CD4-positive, alpha-beta T cell (primary cell): ENCODE measurements at regions of chr22 and their contacts with region 1.

Region 1: GRCh38 chr22:19143967-19144400 is 467 bp downstream of the ESS2 start:
- DNase-seq: peak in 7 of 14 experiments; percentile 13 to 66 (median 25)
- ATAC-seq: peak; percentile 16
- H3K4me3 ChIP-seq: peak overlapping the region; percentile 90
- H3K4me3 Mint-ChIP-seq: peak overlapping the region; percentile 97
- H3K27ac ChIP-seq: peak overlapping the region; percentile 81 to 86
- H3K27ac Mint-ChIP-seq: peak overlapping the region; percentile 94
- H3K4me1 ChIP-seq: peaks cover 23% of the 10 kb centered on the region
- H3K4me1 Mint-ChIP-seq: peaks cover 22% of the 10 kb centered on the region
- H3K27me3 ChIP-seq: peaks cover 10 to 16% of the 10 kb centered on the region in 2 experiments
- H3K27me3 Mint-ChIP-seq: peaks cover 16% of the 10 kb centered on the region
- CTCF ChIP-seq: no peak

Region 2: GRCh38 chr22:19109198-19110067 is 34.6 kb before region 1 on chr22:
- CTCF ChIA-PET with region 1: interaction called, 19 read pairs
- POLR2A ChIA-PET with region 1: interaction called, 25 read pairs
- intact Hi-C with region 1: loop called (anchors 1 to 2 kb)
- DNase-seq: peak; percentile 28 to 88 (median 52)
- ATAC-seq: peak; percentile 84
- H3K4me3 ChIP-seq: peak overlapping the region; percentile 40
- H3K4me3 Mint-ChIP-seq: peak overlapping the region; percentile 84
- H3K27ac ChIP-seq: peak overlapping the region; percentile 85 to 90
- H3K27ac Mint-ChIP-seq: peak overlapping the region; percentile 86
- H3K4me1 ChIP-seq: peaks cover 62% of the 10 kb centered on the region
- H3K4me1 Mint-ChIP-seq: peaks cover 75% of the 10 kb centered on the region
- H3K27me3 ChIP-seq: no peaks in the 10 kb centered on the region
- H3K27me3 Mint-ChIP-seq: no peaks in the 10 kb centered on the region
- CTCF ChIP-seq: no peak

Region 3: GRCh38 chr22:19122143-19122751 is 21.7 kb before region 1 on chr22 and contains the start of gene DGCR2:
- CTCF ChIA-PET with region 1: interaction called, 3 read pairs
- POLR2A ChIA-PET with region 1: interaction called, 34 read pairs
- intact Hi-C with region 1: loop called in 1 of 2 experiments (anchors 1 kb)
- DNase-seq: peak; percentile 95 to 99 (median 96)
- ATAC-seq: peak; percentile 97
- H3K4me3 ChIP-seq: peak within 1 kb of the TSS; percentile 95
- H3K4me3 Mint-ChIP-seq: peak within 1 kb of the TSS; percentile 94
- H3K27ac ChIP-seq: peak within 1 kb of the TSS in 1 of 2 donors; percentile 73
- H3K27ac Mint-ChIP-seq: peak within 1 kb of the TSS; percentile 87
- H3K4me1 ChIP-seq: peaks cover 52% of the 10 kb centered on the region
- H3K4me1 Mint-ChIP-seq: peaks cover 52% of the 10 kb centered on the region
- H3K27me3 ChIP-seq: no peaks in the 10 kb centered on the region
- H3K27me3 Mint-ChIP-seq: no peaks in the 10 kb centered on the region
- CTCF ChIP-seq: no peak
- total RNA-seq, gene DGCR2: 31.9 to 35.5 TPM

Region 4: DNA sequence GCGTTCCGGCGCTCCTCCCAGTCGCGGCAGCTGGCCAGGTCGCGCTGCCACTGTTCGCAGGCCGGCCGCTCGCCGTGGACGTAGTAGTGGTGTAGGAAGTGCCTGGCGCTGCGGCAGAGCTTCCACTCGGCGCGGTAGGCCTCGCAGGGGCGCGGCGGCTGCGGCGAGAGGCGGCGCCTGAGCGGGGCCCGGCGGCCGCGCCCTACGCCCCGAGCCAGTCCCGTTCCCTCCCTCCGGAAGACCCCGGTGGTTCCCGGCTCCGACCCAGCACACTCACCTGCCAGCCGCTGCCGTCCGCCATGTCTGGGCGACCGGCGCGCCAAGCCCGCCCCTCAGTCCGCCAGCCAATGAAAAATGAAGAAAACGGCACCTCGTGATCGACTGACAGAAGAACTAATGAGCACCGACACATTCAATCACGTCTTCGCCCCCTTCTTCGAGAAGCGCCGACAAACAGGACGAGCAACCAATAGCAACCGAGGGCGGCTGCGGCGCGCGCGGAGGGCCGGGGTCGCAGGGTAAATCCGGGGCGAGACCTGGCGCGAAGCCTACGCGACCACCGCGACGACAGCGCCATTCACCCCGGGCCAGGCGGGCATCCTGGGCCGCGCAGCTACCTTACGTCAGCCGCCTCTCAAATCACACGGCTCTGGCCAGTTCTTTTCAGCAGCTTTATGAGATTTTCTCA is 303.5 kb after region 1 on chr22 and contains the start of gene C22orf39:
- CTCF ChIA-PET with region 1: no interaction called
- POLR2A ChIA-PET with region 1: interaction called, 7 read pairs
- intact Hi-C with region 1: loop called in 1 of 2 experiments (anchors 10 kb)
- DNase-seq: peak; percentile 75 to 96 (median 85)
- ATAC-seq: peak; percentile 92
- H3K4me3 ChIP-seq: peak within 1 kb of the TSS; percentile 88
- H3K4me3 Mint-ChIP-seq: peak within 1 kb of the TSS; percentile 93
- H3K27ac ChIP-seq: peak within 1 kb of the TSS; percentile 82 to 85
- H3K27ac Mint-ChIP-seq: peak within 1 kb of the TSS; percentile 91
- H3K4me1 ChIP-seq: peaks cover 38% of the 10 kb centered on the region
- H3K4me1 Mint-ChIP-seq: peaks cover 52% of the 10 kb centered on the region
- H3K27me3 ChIP-seq: no peaks in the 10 kb centered on the region
- H3K27me3 Mint-ChIP-seq: no peaks in the 10 kb centered on the region
- CTCF ChIP-seq: no peak
- total RNA-seq, gene C22orf39: 30.2 to 32.6 TPM

Region 5: DNA sequence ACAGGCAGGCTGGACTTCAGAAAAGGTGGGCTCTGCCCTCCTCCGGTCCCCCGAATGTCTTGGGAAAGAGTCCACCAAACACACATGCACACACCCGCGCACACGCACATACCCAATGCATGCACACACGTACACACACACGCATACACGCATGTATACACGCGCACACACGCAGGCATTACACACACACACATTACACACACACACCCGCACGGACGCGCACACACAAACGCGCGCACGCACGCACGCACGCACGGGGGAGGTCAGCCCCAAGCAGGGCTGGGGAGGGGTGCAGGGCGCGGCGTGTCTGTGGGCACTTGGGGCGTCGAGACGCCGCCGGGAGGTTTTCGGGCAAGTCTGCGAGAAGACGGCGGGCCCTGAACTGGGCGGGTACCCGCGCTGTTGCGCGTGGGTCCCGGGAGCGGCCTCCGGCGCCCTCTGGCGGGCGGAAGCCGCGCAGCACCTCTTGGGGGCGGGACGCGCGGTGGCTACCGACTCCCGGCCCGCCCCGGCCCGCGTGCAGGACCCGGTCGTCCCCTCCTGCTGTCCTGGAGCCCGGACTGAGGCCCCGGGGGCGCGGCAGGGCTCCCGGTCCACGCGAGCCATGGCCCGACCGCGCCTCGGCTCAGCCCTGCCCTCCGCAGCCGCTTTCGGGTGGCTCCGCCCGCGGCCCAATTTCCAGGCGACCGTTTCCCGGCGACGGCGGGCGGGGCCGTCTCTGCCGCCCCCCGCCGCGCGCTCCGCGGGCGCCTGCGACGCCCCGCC is 573.9 kb after region 1 on chr22:
- CTCF ChIA-PET with region 1: no interaction called
- POLR2A ChIA-PET with region 1: interaction called, 3 read pairs
- intact Hi-C with region 1: loop called (anchors 1 to 2 kb)
- DNase-seq: peak; percentile 68 to 91 (median 78)
- ATAC-seq: peak; percentile 95
- H3K4me3 ChIP-seq: peak overlapping the region; percentile 31
- H3K4me3 Mint-ChIP-seq: peak overlapping the region; percentile 82
- H3K27ac ChIP-seq: no peak overlapping the region
- H3K27ac Mint-ChIP-seq: no peak overlapping the region
- H3K4me1 ChIP-seq: peaks cover 35% of the 10 kb centered on the region
- H3K4me1 Mint-ChIP-seq: peaks cover 10% of the 10 kb centered on the region
- H3K27me3 ChIP-seq: peaks cover 58 to 63% of the 10 kb centered on the region in 2 experiments
- H3K27me3 Mint-ChIP-seq: peaks cover 45% of the 10 kb centered on the region
- CTCF ChIP-seq: peak; percentile 96